ENCODE measurements at regions of chr12 and their contacts with region 1.

Region 1: GRCh38 chr12:31267966-31268365 is 58.0 kb downstream of the SINHCAF start:
- DNase-seq: no peak
- ATAC-seq: no peak
- H3K4me3 ChIP-seq: no peak overlapping the region
- H3K4me3 Mint-ChIP-seq: no peak overlapping the region
- H3K27ac ChIP-seq: no peak overlapping the region
- H3K27ac Mint-ChIP-seq: no peak overlapping the region
- H3K4me1 ChIP-seq: no peaks in the 10 kb centered on the region
- H3K4me1 Mint-ChIP-seq: no peaks in the 10 kb centered on the region
- H3K27me3 ChIP-seq: no peaks in the 10 kb centered on the region
- H3K27me3 Mint-ChIP-seq: no peaks in the 10 kb centered on the region
- CTCF ChIP-seq: no peak

Region 2: DNA sequence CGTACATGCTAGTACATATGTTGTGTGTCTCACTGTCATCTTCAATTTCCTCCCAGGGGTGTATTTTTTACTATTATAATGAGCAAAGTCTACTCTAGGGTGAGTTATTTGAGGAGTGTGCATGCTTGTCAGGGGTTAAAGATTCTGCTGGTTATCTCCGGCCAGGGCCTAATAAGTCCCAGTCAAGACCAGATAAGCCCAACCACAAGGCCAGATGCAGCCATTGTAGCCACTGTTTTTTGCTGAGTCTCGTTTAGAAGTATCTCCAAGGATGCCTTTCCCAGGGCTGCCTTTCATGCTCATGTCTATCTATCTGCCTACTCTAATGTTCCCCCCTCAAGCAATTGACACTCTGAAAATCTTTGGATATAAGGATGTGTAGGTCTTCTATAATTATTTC is 872.8 kb before region 1 on chr12:
- intact Hi-C with region 1: no loop called
- DNase-seq: no peak
- ATAC-seq: no peak
- H3K4me3 ChIP-seq: no peak overlapping the region
- H3K4me3 Mint-ChIP-seq: no peak overlapping the region
- H3K27ac ChIP-seq: no peak overlapping the region
- H3K27ac Mint-ChIP-seq: no peak overlapping the region
- H3K4me1 ChIP-seq: no peaks in the 10 kb centered on the region
- H3K4me1 Mint-ChIP-seq: no peaks in the 10 kb centered on the region
- H3K27me3 ChIP-seq: no peaks in the 10 kb centered on the region
- H3K27me3 Mint-ChIP-seq: no peaks in the 10 kb centered on the region
- CTCF ChIP-seq: no peak

Region 3: DNA sequence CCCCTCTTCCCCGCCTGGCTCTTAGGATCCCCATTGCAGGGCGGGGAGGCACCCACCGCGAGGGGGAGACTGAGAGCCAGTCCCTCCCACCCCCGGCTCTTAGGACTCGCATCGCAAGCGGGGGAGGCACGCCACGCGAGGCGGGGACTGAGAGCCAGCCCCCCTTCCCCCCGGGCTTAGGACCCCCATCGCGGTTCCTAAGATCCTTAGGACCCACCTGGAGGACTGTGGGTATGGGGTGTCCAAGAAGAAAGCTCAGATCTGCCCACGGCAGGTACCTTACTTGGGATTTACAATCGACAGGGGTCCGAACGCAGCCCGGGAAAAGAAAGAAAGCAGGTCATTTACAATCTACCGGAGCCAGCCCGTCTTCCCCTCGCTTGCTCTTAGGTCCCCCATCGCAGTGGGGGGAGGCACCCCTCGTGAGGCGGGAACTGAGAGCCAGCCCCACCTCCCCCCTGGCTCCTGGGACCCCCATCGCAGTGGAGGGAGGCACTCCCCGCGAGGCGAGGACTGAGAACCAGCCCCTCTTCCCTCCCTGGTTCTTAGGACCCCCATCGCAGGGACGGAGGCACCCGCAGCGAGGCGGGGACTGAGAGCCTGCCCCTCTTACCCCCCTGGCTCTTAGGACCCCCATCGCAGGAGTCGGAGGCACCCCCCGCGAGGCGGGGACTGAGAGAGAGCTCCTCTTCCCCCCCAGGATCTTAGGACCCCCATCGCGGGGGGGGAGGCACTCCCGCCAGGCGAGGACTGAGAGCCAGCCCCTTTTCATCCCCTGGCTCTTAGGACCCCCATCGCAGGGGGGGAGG is 150.6 kb before region 1 on chr12:
- intact Hi-C with region 1: loop called (anchors 2 kb)
- DNase-seq: peak; percentile 38 to 81
- ATAC-seq: peak; percentile 76 to 82 (median 80)
- H3K4me3 ChIP-seq: peak overlapping the region; percentile 47
- H3K4me3 Mint-ChIP-seq: peak overlapping the region; percentile 84
- H3K27ac ChIP-seq: no peak overlapping the region
- H3K27ac Mint-ChIP-seq: no peak overlapping the region
- H3K4me1 ChIP-seq: peaks cover 32% of the 10 kb centered on the region
- H3K4me1 Mint-ChIP-seq: peaks cover 0 to 11% of the 10 kb centered on the region in 2 donors
- H3K27me3 ChIP-seq: peaks cover 19% of the 10 kb centered on the region
- H3K27me3 Mint-ChIP-seq: peaks cover 5 to 6% of the 10 kb centered on the region in 2 donors
- CTCF ChIP-seq: peak; percentile 50

Region 4: DNA sequence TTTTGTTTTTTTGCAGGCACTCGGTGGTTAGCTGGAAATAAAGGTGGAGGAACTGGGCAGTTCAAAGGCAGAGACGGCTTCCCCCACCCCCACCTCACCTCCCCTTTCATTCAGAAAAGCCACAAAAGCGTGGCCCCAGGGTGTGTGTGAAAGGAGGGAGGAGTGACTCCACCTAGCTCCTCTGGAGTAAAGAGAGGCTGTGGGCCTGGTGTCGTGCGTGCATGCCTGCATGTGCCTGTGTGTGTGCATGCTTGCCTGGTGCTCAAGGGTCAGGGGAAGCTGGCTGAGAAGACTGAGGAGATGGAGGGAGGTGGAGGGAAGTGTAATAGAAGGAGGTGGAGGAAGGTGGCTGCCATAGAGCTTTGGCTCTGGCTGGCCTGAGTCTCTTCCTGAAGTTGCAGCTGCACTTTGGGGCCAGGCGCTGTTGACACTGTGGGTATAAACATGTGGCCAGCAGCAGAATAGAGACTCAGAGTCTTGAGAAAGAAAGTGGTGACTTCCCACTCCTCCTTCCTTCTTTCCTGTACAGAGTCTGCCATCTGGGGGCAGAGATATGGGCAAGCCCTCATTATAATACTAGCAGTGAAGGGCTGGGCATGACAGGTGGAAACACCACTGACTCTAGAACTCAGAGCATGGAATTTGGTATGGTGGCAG is 94.9 kb after region 1 on chr12:
- intact Hi-C with region 1: loop called (anchors 2 kb)
- DNase-seq: peak; percentile 17 to 44
- ATAC-seq: peak; percentile 76 to 84 (median 77)
- H3K4me3 ChIP-seq: peak overlapping the region; percentile 20
- H3K4me3 Mint-ChIP-seq: peak overlapping the region; percentile 84
- H3K27ac ChIP-seq: peak overlapping the region; percentile 65
- H3K27ac Mint-ChIP-seq: peak overlapping the region; percentile 88 to 89
- H3K4me1 ChIP-seq: peaks cover 25% of the 10 kb centered on the region
- H3K4me1 Mint-ChIP-seq: peaks cover 20 to 27% of the 10 kb centered on the region in 2 donors
- H3K27me3 ChIP-seq: no peaks in the 10 kb centered on the region
- H3K27me3 Mint-ChIP-seq: no peaks in the 10 kb centered on the region
- CTCF ChIP-seq: no peak